H1 (cell line): ENCODE measurements at regions of chr19 and their contacts with region 1.

Region 1: GRCh38 chr19:46788262-46788967 is at the start of gene SLC1A5:
- DNase-seq: peak; percentile 95 to 99
- H3K4me3 ChIP-seq: peak within 1 kb of the TSS; percentile 78 to 96 (median 90)
- H3K27ac ChIP-seq: peak within 1 kb of the TSS; percentile 77; the same call in 1 of the 2 replicates
- H3K4me1 ChIP-seq: peaks cover 6 to 17% (median 10%) of the 10 kb centered on the region in 4 experiments; a peak in 6 of 7 replicates
- H3K27me3 ChIP-seq: no peaks in the 10 kb centered on the region; a peak in 1 of 7 replicates
- CTCF ChIP-seq: no peak
- EP300 ChIP-seq: no peak
- POLR2A ChIP-seq: peak; percentile 99
- RAD21 ChIP-seq: no peak; a peak in 1 of 4 replicates
- total RNA-seq, gene SLC1A5: 290 and 291 TPM in 2 replicates

Region 2: GRCh38 chr19:46736544-46737297 is 51.7 kb before region 1 on chr19:
- CTCF ChIA-PET with region 1: interaction called, 3 read pairs
- POLR2A ChIA-PET with region 1: interaction called, 12 read pairs
- DNase-seq: no peak
- H3K4me3 ChIP-seq: no peak overlapping the region
- H3K27ac ChIP-seq: no peak overlapping the region
- H3K4me1 ChIP-seq: peaks cover 0 to 6% (median 2%) of the 10 kb centered on the region in 4 experiments; a peak in 3 of 7 replicates
- H3K27me3 ChIP-seq: no peaks in the 10 kb centered on the region
- CTCF ChIP-seq: no peak
- EP300 ChIP-seq: no peak
- POLR2A ChIP-seq: no peak
- RAD21 ChIP-seq: no peak

Region 3: GRCh38 chr19:46759817-46760333 is 28.5 kb before region 1 on chr19:
- CTCF ChIA-PET with region 1: interaction called, 25 read pairs
- POLR2A ChIA-PET with region 1: interaction called, 333 read pairs
- DNase-seq: no peak
- H3K4me3 ChIP-seq: no peak overlapping the region
- H3K27ac ChIP-seq: no peak overlapping the region
- H3K4me1 ChIP-seq: peaks cover 0 to 5% (median 0%) of the 10 kb centered on the region in 4 experiments; a peak in 4 of 7 replicates
- H3K27me3 ChIP-seq: no peaks in the 10 kb centered on the region
- CTCF ChIP-seq: no peak
- EP300 ChIP-seq: no peak
- POLR2A ChIP-seq: no peak
- RAD21 ChIP-seq: no peak

Region 4: DNA sequence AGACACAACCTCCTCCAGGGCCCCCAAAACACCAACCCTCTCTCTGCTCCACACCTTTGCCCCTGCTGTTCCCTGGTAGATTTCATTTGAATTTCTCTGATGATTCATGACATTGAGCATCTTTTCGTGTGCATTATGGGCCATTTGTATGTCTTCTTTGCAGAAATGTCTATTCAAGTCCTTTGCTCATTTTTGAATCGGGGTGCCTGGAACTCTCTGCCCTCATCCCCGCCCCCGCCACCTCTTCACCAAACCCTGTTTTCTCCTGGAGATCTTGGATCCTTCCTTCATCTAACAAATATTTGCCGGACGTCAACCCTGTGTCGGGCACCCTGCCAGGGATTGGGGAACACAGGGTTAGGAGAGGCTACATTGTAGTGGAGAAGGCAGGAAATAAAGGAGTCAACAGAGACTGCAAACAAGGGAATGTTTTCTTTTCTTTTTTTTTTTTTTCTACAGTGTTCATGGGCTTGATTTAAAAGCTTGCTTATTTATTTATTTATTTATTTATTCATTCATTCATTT is 25.5 kb after region 1 on chr19:
- CTCF ChIA-PET with region 1: no interaction called
- POLR2A ChIA-PET with region 1: interaction called, 68 read pairs
- DNase-seq: no peak
- H3K4me3 ChIP-seq: no peak overlapping the region
- H3K27ac ChIP-seq: no peak overlapping the region
- H3K4me1 ChIP-seq: peaks cover 0 to 4% (median 1%) of the 10 kb centered on the region in 4 experiments; a peak in 1 of 7 replicates
- H3K27me3 ChIP-seq: no peaks in the 10 kb centered on the region
- CTCF ChIP-seq: no peak
- EP300 ChIP-seq: no peak
- POLR2A ChIP-seq: no peak
- RAD21 ChIP-seq: no peak

Region 5: GRCh38 chr19:46840136-46840942 is 51.9 kb after region 1 on chr19:
- CTCF ChIA-PET with region 1: interaction called, 22 read pairs
- POLR2A ChIA-PET with region 1: interaction called, 78 read pairs
- DNase-seq: peak in 1 of 2 experiments; percentile 60
- H3K4me3 ChIP-seq: no peak overlapping the region
- H3K27ac ChIP-seq: 0 out of 2 replicates have a peak overlapping the region, but pooled peaks have one; percentile 44
- H3K4me1 ChIP-seq: no peaks in the 10 kb centered on the region
- H3K27me3 ChIP-seq: no peaks in the 10 kb centered on the region
- CTCF ChIP-seq: peak; percentile 78 to 93 (median 85)
- EP300 ChIP-seq: no peak
- POLR2A ChIP-seq: no peak
- RAD21 ChIP-seq: peak; percentile 88 to 90